Activated CD4-positive, alpha-beta T cell treated with anti-CD3 and anti-CD28 coated beads for 36 hours (primary cell): ENCODE measurements at regions of chr5 and their contacts with region 1.

Region 1: DNA sequence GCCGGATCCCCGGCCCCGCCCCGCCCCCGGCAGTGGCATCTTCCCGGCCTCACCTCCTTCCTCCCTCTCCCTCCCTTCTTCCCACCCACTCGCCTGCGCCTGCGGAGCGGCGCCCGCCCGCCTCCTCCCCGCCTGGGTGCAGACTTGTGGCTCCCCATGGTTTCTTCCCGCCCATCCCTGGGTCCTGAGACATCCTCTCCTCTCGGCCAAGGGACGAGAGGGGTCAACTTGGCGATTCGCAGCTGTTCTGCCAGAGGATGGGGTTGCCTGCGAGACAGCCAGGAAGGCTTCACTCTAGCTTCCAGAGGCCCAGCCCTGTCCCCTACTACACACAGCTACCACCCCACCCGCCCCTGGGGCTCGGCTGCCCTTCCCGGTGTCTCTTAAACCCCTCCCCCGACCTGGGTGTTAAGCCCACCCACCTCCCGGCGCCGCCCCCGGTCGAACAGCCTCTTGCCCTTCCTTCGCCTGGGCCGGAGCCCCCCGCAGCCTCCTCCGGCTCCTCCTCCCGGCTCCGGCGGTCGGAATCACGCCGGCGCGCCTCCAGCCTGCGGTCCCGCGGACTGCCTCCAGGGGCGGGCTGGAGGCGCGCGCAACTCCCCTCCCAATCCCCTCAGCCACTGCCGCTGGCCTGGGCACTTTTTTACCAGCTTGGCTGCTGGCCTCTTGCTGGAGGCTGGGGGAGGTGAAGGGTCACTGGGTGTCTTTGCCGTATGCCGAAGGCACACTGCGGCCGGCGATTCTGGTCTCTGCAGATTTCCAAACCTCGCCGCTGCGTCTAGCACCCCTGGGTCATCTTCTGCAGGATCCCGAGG is 1.9 kb downstream of the JADE2 start:
- DNase-seq: peak; percentile 87
- ATAC-seq: peak; percentile 51
- H3K4me3 Mint-ChIP-seq: peak overlapping the region; percentile 99
- H3K27ac Mint-ChIP-seq: peak overlapping the region; percentile 89
- H3K4me1 Mint-ChIP-seq: peaks cover 49% of the 10 kb centered on the region
- H3K27me3 Mint-ChIP-seq: no peaks in the 10 kb centered on the region

Region 2: DNA sequence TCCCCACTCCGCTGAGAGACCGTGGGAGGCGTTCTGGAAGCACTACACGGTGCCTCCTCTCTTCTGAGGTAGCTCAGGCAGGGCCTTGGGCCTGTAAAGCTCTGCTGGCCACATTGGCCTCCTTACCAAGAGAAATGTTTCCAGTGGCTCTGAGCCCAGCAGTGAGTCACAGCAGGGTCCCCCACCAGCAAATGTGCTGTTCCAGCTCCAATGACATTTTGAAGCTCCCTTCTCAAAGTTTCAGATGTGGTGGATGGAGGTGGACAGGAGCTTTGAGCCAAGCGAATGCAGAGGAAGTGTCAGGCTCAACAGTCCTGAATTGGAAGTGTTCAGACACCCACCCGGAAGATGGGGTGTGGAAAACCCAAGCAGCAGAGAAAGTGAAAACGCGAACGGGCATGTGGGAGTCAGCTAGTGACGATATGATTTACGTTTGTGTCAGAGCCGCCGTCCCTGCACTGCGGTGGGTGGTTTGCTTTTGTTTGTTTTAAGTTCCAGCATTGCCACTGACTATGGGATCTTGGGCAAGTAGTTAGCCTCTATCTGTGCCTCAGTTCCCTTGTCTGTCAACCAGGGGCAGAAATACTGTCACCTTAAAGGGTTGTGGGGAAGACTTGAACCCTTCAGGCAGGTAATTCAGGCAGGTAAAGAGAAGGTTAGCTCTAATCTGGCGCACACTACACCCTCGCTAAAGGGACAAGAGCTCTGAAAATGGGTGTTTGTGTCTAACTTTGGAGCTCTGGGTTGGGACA is 597.1 kb before region 1 on chr5:
- CTCF ChIA-PET with region 1: no interaction called
- POLR2A ChIA-PET with region 1: no interaction called
- intact Hi-C with region 1: no loop called
- DNase-seq: peak; percentile 89
- ATAC-seq: peak; percentile 84
- H3K4me3 Mint-ChIP-seq: peak overlapping the region; percentile 74
- H3K27ac Mint-ChIP-seq: peak overlapping the region; percentile 99
- H3K4me1 Mint-ChIP-seq: peaks cover 61% of the 10 kb centered on the region
- H3K27me3 Mint-ChIP-seq: no peaks in the 10 kb centered on the region

Region 3: DNA sequence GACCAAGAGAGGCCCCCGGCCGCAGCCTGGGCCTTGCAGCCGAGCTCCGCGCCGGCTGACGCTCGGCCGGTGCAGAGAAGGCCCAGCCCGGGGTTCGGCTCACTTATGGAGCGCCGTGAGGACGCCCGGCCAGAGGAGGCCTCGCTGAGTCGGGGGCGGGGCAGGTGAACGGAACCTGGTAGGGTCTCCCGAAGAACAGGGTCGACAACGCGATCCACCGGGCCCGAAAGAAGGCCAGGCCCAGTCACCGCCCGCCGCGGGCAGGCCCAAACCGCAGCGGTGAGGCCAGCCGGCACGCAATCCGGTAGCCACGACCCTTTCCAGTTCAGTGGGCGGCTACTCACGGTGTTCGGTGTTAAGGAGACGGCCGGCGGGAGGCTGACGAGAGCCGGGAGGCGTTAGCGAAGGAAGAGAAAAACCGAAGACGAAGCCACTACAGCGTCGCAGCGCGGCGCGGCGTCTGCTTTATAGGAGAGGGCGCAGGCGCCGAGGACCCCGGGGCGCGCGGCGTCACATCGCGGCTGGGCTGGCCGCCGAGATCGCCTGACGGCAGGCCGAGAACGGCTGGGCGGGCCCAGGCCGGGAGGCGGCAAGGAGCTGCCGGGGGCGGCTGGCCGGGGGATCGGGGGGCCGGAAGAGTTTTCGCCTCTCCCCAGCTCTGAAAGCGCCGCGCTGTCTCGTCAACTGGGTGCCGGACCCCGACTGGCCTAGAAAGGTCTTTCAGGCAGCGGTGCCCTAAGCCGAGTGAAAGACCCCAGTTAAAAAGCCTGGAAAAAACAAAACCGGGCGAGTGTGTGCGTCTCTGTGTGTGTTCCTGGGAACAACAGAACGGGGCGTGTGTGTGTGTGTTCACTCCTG is 350.6 kb before region 1 on chr5 and contains the start of gene SKP1:
- CTCF ChIA-PET with region 1: no interaction called
- POLR2A ChIA-PET with region 1: interaction called, 3 read pairs
- intact Hi-C with region 1: loop called in 1 of 2 experiments (anchors 1 kb)
- DNase-seq: peak; percentile 91
- ATAC-seq: peak; percentile 85
- H3K4me3 Mint-ChIP-seq: peak within 1 kb of the TSS; percentile 98
- H3K27ac Mint-ChIP-seq: peak within 1 kb of the TSS; percentile 95
- H3K4me1 Mint-ChIP-seq: peaks cover 32% of the 10 kb centered on the region
- H3K27me3 Mint-ChIP-seq: no peaks in the 10 kb centered on the region
- total RNA-seq, gene SKP1: 218 to 265 TPM

Region 4: DNA sequence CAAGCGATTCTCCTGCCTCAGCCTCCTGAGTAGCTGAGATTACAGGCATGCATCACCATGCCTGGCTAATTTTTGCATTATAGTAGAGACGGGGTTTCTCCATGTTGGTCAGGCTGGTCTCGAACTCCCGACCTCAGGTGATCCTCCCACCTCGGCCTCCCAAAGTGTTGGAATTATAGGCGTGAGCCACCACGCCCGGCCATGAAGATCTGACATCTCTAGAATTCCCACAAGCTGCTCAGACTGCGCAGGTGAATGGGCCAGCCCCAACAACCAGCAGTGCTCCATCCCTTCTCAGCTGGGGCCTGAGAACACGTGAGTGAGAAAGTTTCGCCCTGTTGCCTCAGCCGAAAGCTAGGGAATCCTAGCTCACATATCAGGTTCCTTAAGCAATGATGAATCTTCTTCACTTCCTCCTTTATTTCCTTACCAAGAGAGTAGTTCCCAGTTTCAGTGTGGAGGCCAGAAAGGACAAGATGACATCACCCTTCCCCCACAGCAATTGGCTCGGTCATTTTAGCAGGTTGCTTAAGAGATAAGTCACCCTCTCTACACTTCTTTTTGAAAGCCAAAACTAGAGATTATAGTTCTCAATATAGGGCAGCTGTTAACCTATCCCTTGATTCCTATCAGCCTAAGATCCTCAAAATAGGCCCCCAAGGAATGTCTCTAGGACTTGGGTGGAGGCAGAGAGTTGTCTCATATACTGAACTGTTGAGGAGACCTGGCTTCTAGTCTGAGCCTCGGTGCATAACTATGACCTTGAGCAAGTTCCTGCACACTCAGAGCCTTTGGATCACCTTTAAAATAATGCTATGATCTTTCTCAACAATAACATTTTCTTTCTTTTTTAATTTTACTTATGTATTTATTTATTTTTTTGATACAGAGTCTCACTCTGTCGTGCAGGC is 277.6 kb before region 1 on chr5:
- CTCF ChIA-PET with region 1: no interaction called
- POLR2A ChIA-PET with region 1: no interaction called
- intact Hi-C with region 1: no loop called
- DNase-seq: no peak
- ATAC-seq: no peak
- H3K4me3 Mint-ChIP-seq: no peak overlapping the region
- H3K27ac Mint-ChIP-seq: no peak overlapping the region
- H3K4me1 Mint-ChIP-seq: no peaks in the 10 kb centered on the region
- H3K27me3 Mint-ChIP-seq: peaks cover 4% of the 10 kb centered on the region

Region 5: DNA sequence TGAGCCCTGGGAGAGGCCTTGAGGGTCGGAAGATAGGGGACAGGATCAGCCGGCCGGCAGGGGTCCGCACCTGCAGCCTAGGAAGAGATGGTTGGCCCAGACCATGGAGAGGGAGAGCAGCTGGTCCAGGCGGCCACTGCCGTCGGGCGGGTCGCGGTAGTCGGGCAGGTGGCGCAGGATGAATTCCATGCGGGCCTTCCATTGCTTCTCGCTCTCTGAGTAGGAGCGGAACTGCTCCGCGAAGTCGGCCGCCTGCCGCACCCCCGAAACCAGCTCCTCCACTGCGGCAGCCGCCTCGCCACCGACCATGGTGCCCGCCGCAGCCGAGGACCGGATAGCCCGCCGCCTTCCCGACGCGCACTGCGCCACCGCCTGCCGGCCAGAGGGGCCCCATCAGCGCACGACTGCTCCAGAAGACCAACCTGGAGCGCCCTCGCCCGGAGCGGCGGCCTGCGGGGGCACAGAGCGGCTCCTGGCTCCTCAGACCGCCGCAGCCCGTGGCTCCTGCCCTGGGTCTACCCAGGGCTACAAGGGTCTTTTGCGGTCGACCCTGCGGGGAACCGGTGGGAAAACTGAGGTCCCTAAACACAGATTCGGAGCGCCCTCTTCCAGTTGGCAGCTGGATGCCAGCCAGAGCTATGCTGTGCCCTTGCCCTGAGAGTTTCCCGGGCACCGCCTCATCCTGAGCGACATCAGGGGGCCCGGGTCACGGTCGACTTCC is 115.6 kb before region 1 on chr5 and contains the start of gene CDKN2AIPNL:
- CTCF ChIA-PET with region 1: interaction called, 10 read pairs
- POLR2A ChIA-PET with region 1: interaction called, 5 read pairs
- intact Hi-C with region 1: loop called (anchors 1 kb)
- DNase-seq: peak; percentile 95
- ATAC-seq: peak; percentile 100
- H3K4me3 Mint-ChIP-seq: peak within 1 kb of the TSS; percentile 96
- H3K27ac Mint-ChIP-seq: peak within 1 kb of the TSS; percentile 92
- H3K4me1 Mint-ChIP-seq: peaks cover 35% of the 10 kb centered on the region
- H3K27me3 Mint-ChIP-seq: no peaks in the 10 kb centered on the region
- total RNA-seq, gene CDKN2AIPNL: 36.1 to 42.0 TPM

Region 6: GRCh38 chr5:134511788-134512650 is 15.3 kb before region 1 on chr5:
- CTCF ChIA-PET with region 1: interaction called, 10 read pairs
- POLR2A ChIA-PET with region 1: interaction called, 3 read pairs
- intact Hi-C with region 1: loop called (anchors 1 to 2 kb)
- DNase-seq: peak; percentile 34
- ATAC-seq: no peak
- H3K4me3 Mint-ChIP-seq: no peak overlapping the region
- H3K27ac Mint-ChIP-seq: peak overlapping the region; percentile 38
- H3K4me1 Mint-ChIP-seq: peaks cover 36% of the 10 kb centered on the region
- H3K27me3 Mint-ChIP-seq: no peaks in the 10 kb centered on the region

Region 7: DNA sequence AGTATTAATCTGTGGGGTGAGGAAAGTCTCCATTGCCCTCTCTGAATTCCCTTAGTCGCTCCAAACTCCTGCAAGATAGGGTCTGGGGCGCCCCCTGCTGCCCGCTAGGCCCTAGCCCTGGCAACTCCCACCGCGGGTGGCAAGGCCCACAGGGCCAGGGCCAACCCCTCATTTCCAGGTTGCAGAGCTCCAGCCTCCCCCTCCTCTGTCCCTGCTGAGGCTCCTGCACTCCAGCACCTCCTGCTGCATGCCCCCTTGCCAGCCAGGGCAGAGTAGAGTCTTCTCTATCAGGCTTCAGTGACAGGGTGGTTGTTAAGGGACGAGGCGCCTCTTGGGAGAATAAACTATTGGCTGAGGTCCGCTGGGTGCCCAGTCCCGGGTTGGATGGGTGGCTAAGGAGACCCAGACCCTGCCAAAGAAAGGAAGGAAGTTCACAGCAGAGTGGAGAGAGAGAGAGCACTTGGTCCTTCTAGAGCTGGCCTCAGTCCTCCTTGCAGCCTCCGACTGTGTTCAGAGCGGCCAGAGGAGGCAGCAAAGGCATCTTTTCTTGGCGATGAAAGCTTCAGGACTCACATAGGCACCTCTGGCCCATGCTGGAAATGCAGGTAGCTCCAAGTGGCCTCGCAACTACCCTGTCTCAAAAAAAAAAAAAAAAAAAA is 59.6 kb after region 1 on chr5:
- CTCF ChIA-PET with region 1: interaction called, 10 read pairs
- POLR2A ChIA-PET with region 1: no interaction called
- intact Hi-C with region 1: no loop called
- DNase-seq: peak; percentile 95
- ATAC-seq: peak; percentile 91
- H3K4me3 Mint-ChIP-seq: no peak overlapping the region
- H3K27ac Mint-ChIP-seq: peak overlapping the region; percentile 78
- H3K4me1 Mint-ChIP-seq: peaks cover 14% of the 10 kb centered on the region
- H3K27me3 Mint-ChIP-seq: no peaks in the 10 kb centered on the region

Region 8: GRCh38 chr5:134819404-134819963 is 292.1 kb after region 1 on chr5:
- CTCF ChIA-PET with region 1: no interaction called
- POLR2A ChIA-PET with region 1: no interaction called
- intact Hi-C with region 1: no loop called
- DNase-seq: no peak
- ATAC-seq: no peak
- H3K4me3 Mint-ChIP-seq: no peak overlapping the region
- H3K27ac Mint-ChIP-seq: no peak overlapping the region
- H3K4me1 Mint-ChIP-seq: no peaks in the 10 kb centered on the region
- H3K27me3 Mint-ChIP-seq: no peaks in the 10 kb centered on the region

Region 9: GRCh38 chr5:134845852-134846640 is 318.7 kb after region 1 on chr5 and contains the start of gene C5orf24:
- CTCF ChIA-PET with region 1: no interaction called
- POLR2A ChIA-PET with region 1: interaction called, 6 read pairs
- intact Hi-C with region 1: loop called in 1 of 2 experiments (anchors 5 kb)
- DNase-seq: peak; percentile 96
- ATAC-seq: peak; percentile 95
- H3K4me3 Mint-ChIP-seq: peak within 1 kb of the TSS; percentile 95
- H3K27ac Mint-ChIP-seq: peak within 1 kb of the TSS; percentile 97
- H3K4me1 Mint-ChIP-seq: peaks cover 29% of the 10 kb centered on the region
- H3K27me3 Mint-ChIP-seq: no peaks in the 10 kb centered on the region
- total RNA-seq, gene C5orf24: 24.5 to 24.9 TPM

Region 10: GRCh38 chr5:135126688-135127504 is 599.5 kb after region 1 on chr5:
- CTCF ChIA-PET with region 1: no interaction called
- POLR2A ChIA-PET with region 1: no interaction called
- intact Hi-C with region 1: no loop called
- DNase-seq: no peak
- ATAC-seq: no peak
- H3K4me3 Mint-ChIP-seq: no peak overlapping the region
- H3K27ac Mint-ChIP-seq: no peak overlapping the region
- H3K4me1 Mint-ChIP-seq: peaks cover 6% of the 10 kb centered on the region
- H3K27me3 Mint-ChIP-seq: peaks cover 3% of the 10 kb centered on the region